ENCODE measurements at regions of chr16 and their contacts with region 1.

Region 1: GRCh38 chr16:89560378-89561141 is at the start of gene RPL13:
- DNase-seq: peak; percentile 90 to 96
- ATAC-seq: peak; percentile 93 to 98 (median 94)
- H3K4me3 ChIP-seq: peak within 1 kb of the TSS; percentile 90
- H3K4me3 Mint-ChIP-seq: peak within 1 kb of the TSS; percentile 99
- H3K27ac ChIP-seq: peak within 1 kb of the TSS; percentile 89
- H3K27ac Mint-ChIP-seq: peak within 1 kb of the TSS; percentile 90 to 98
- H3K4me1 ChIP-seq: peaks cover 39% of the 10 kb centered on the region
- H3K4me1 Mint-ChIP-seq: peaks cover 28 to 36% of the 10 kb centered on the region in 2 donors
- H3K27me3 ChIP-seq: no peaks in the 10 kb centered on the region
- H3K27me3 Mint-ChIP-seq: no peaks in the 10 kb centered on the region
- CTCF ChIP-seq: no peak
- total RNA-seq, gene RPL13: 1,286 to 1,549 (median 1,294) TPM

Region 2: GRCh38 chr16:89230255-89230654 is 330.3 kb before region 1 on chr16:
- intact Hi-C with region 1: no loop called
- DNase-seq: no peak
- ATAC-seq: no peak
- H3K4me3 ChIP-seq: no peak overlapping the region
- H3K4me3 Mint-ChIP-seq: no peak overlapping the region
- H3K27ac ChIP-seq: no peak overlapping the region
- H3K27ac Mint-ChIP-seq: no peak overlapping the region
- H3K4me1 ChIP-seq: no peaks in the 10 kb centered on the region
- H3K4me1 Mint-ChIP-seq: peaks cover 6 to 7% of the 10 kb centered on the region in 2 donors
- H3K27me3 ChIP-seq: no peaks in the 10 kb centered on the region
- H3K27me3 Mint-ChIP-seq: no peaks in the 10 kb centered on the region
- CTCF ChIP-seq: no peak

Region 3: GRCh38 chr16:89330177-89330856 is 230.2 kb before region 1 on chr16:
- intact Hi-C with region 1: loop called (anchors 1 kb)
- DNase-seq: peak in 1 of 2 donors; percentile 80
- ATAC-seq: peak; percentile 12 to 42 (median 27)
- H3K4me3 ChIP-seq: no peak overlapping the region
- H3K4me3 Mint-ChIP-seq: peak overlapping the region; percentile 40
- H3K27ac ChIP-seq: peak overlapping the region; percentile 51
- H3K27ac Mint-ChIP-seq: peak overlapping the region; percentile 18 to 70
- H3K4me1 ChIP-seq: peaks cover 89% of the 10 kb centered on the region
- H3K4me1 Mint-ChIP-seq: peaks cover 77 to 78% of the 10 kb centered on the region in 2 donors
- H3K27me3 ChIP-seq: no peaks in the 10 kb centered on the region
- H3K27me3 Mint-ChIP-seq: no peaks in the 10 kb centered on the region
- CTCF ChIP-seq: no peak

Region 4: DNA sequence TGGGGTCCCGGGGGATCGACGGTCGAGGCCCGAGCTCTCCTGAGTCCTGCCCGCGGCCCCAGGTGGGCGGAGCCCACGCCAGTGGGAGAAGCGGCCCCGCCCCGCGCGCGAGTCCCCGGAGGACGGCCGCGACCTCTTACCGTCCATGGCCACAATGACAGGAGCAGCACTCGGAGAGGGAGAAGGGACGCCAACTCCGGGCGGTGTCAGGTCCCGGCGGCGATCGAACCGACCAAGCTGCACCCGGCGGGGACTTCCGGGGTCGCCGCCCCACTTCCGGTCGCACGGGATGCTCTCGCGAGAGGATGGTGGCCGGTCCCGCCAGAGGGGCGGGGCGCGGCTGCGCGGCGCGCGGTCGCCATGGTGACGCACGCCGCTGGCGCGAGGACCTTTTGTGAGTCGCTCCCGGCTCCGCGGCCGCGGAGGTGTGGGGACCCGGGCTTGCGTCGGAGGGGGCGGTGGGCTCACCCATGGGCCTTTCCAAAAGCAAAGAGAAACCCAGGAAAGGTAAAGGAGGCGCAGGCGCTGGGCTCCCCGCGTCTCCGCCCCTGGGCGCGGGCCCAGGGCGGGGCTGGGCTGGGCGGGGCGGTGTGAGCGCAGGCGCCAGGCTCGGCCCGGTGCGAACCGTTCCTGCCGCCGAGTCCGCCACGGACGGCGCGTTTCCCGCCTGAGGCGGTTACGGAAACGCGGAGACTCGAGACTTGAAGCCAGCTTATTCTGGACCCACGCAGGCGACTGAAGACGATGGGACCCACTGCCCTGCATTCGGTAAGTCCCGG is 97.1 kb after region 1 on chr16 and contains the starts of genes CHMP1A and SPATA33:
- intact Hi-C with region 1: loop called (anchors 10 kb)
- DNase-seq: peak; percentile 93 to 97
- ATAC-seq: peak; percentile 90 to 96 (median 92)
- H3K4me3 ChIP-seq: peak within 1 kb of the TSS; percentile 78
- H3K4me3 Mint-ChIP-seq: peak within 1 kb of the TSS; percentile 91
- H3K27ac ChIP-seq: peak within 1 kb of the TSS; percentile 68
- H3K27ac Mint-ChIP-seq: peak within 1 kb of the TSS; percentile 82 to 83
- H3K4me1 ChIP-seq: peaks cover 38% of the 10 kb centered on the region
- H3K4me1 Mint-ChIP-seq: peaks cover 27 to 37% of the 10 kb centered on the region in 2 donors
- H3K27me3 ChIP-seq: no peaks in the 10 kb centered on the region
- H3K27me3 Mint-ChIP-seq: no peaks in the 10 kb centered on the region
- CTCF ChIP-seq: no peak
- total RNA-seq, gene CHMP1A: 124 to 135 (median 134) TPM
- total RNA-seq, gene SPATA33: 6.5 to 11.9 (median 8.4) TPM

Measured in natural killer cell (primary cell).